ENCODE measurements at regions of chr18 and their contacts with region 1.

Region 1: GRCh38 chr18:13558124-13558523 is 168.2 kb downstream of the FAM210A start:
- DNase-seq: peak; percentile 56 to 78 (median 76)
- ATAC-seq: peak; percentile 80 to 84
- H3K4me3 ChIP-seq: no peak overlapping the region
- H3K27ac ChIP-seq: peak overlapping the region; percentile 58
- H3K4me1 ChIP-seq: peaks cover 8% of the 10 kb centered on the region
- H3K27me3 ChIP-seq: no peaks in the 10 kb centered on the region

Region 2: GRCh38 chr18:13629841-13630715 is 72.0 kb after region 1 on chr18:
- intact Hi-C with region 1: loop called in 2 of 4 experiments (anchors 5 kb)
- DNase-seq: peak in 2 of 3 donors; percentile 46 to 81
- ATAC-seq: peak; percentile 84 to 87
- H3K4me3 ChIP-seq: no peak overlapping the region
- H3K27ac ChIP-seq: peak overlapping the region; percentile 29
- H3K4me1 ChIP-seq: no peaks in the 10 kb centered on the region
- H3K27me3 ChIP-seq: no peaks in the 10 kb centered on the region